GM12878 (cell line): ENCODE measurements at regions of chr5 and their contacts with region 1.

Region 1: DNA sequence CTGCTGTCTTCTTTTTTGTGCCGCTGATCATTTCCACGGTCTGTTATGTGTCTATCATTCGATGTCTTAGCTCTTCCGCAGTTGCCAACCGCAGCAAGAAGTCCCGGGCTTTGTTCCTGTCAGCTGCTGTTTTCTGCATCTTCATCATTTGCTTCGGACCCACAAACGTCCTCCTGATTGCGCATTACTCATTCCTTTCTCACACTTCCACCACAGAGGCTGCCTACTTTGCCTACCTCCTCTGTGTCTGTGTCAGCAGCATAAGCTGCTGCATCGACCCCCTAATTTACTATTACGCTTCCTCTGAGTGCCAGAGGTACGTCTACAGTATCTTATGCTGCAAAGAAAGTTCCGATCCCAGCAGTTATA is 17.1 kb downstream of the F2R start:
- DNase-seq: peak; percentile 96
- ATAC-seq: peak; percentile 86
- H3K4me3 ChIP-seq: peak overlapping the region; percentile 50
- H3K27ac ChIP-seq: peak overlapping the region; percentile 61; the same call in 1 of the 2 replicates
- H3K4me1 ChIP-seq: peaks cover 29% of the 10 kb centered on the region
- H3K27me3 ChIP-seq: no peaks in the 10 kb centered on the region
- CTCF ChIP-seq: no peak
- EP300 ChIP-seq: peak; percentile 99 to 100
- POLR2A ChIP-seq: no peak
- RAD21 ChIP-seq: no peak

Region 2: DNA sequence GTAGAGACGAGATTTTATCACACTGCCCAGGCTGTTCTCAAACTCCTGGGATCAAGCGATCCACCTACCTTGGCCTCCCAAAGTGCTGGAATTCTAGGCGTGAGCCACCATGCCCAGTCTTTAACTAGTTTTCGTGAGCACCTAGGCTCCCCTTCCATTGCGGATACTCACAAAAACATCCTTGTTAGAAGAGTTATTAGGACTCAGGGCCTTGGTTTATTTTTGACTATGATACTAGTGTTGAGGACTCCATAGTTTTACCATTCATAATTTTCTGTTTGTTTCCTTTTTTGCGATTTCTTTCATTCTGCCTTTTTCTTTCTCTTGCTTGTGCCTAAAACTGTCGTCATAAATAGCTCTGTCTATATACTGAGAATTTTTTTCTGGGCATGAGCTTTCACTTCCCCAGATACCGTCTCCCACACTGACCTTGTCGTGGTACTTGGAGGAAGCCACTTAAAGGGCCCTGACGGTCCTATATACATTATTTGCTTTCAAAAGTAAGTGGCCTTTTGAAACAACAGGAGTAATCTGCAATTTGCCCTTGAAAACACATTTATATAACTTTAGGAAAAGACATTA is 12.0 kb before region 1 on chr5:
- CTCF ChIA-PET with region 1: interaction called, 153 read pairs
- POLR2A ChIA-PET with region 1: interaction called, 144 read pairs
- RAD21 ChIA-PET with region 1: interaction called, 254 read pairs
- SMC1A ChIA-PET with region 1: interaction called, 206 read pairs
- in situ Hi-C with region 1: no loop called
- intact Hi-C with region 1: loop called (anchors 1 kb)
- DNase-seq: no peak
- ATAC-seq: peak; percentile 87
- H3K4me3 ChIP-seq: 0 out of 2 replicates have a peak overlapping the region, but pooled peaks have one; percentile 1
- H3K27ac ChIP-seq: no peak overlapping the region
- H3K4me1 ChIP-seq: peaks cover 18% of the 10 kb centered on the region
- H3K27me3 ChIP-seq: peaks cover 0 to 8% of the 10 kb centered on the region in 2 experiments; a peak in 2 of 4 replicates
- CTCF ChIP-seq: no peak
- EP300 ChIP-seq: peak; percentile 79 to 82; a peak in 2 of 4 replicates
- POLR2A ChIP-seq: no peak
- RAD21 ChIP-seq: no peak